H1 (cell line): ENCODE measurements at regions of chr1 and their contacts with region 1.

Region 1: DNA sequence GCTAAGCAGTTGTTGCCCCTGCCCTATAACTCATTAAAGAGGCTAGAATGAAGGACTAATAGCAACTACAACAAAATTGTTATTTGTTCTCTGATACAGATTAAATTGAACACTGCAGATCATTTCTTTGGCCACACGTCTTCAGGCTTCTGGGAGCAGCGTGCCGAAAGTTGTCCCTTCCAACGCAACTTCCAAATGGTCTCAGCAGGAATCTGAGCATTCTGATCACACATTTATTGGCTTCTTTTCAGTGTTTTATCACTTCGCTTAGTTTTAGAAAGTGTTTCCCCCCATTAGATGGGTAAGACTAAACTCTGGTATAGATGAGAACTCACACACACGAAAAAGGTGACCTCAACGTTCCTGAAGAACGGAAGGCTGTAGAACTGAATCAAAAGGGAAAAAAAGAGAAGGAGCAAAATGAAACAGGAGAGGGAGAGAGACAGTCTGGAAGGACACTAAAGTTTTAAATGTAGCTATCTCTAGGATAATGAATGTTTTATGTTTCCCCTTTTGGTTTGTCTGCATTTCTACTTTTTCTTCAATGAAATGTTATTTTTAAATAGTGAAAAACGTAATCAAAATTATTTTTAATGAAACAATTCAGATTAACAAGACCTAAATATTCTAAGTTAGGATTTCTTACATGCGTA is 336.5 kb downstream of the RRAGC start:
- DNase-seq: no peak
- H3K4me3 ChIP-seq: no peak overlapping the region
- H3K27ac ChIP-seq: no peak overlapping the region
- H3K4me1 ChIP-seq: no peaks in the 10 kb centered on the region
- H3K27me3 ChIP-seq: peaks cover 0 to 1% (median 0%) of the 10 kb centered on the region in 4 experiments; a peak in 1 of 7 replicates
- CTCF ChIP-seq: no peak
- EP300 ChIP-seq: no peak
- POLR2A ChIP-seq: no peak
- RAD21 ChIP-seq: no peak

Region 2: DNA sequence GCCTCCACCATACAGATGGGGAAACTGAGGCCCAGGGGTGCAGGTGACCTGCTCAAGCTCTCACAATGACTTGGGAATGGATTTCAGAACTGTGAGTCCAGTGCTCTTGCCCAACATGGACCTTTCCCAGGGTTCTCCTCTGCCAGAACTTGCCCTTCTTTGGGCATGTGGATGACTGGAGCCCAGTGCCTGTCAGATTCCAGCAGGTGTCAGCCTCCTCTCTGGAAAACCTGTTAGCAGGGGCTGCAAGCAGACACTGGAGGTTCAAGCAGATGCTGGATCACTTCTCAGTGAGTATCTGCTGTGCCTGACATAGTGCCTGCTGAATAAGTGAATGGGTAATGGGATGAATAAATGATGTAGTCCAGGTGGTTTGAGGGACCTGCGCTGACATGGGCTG is 162.2 kb before region 1 on chr1:
- CTCF ChIA-PET with region 1: no interaction called
- POLR2A ChIA-PET with region 1: no interaction called
- DNase-seq: no peak
- H3K4me3 ChIP-seq: no peak overlapping the region
- H3K27ac ChIP-seq: no peak overlapping the region
- H3K4me1 ChIP-seq: peaks cover 0 to 6% (median 3%) of the 10 kb centered on the region in 4 experiments; a peak in 3 of 7 replicates
- H3K27me3 ChIP-seq: no peaks in the 10 kb centered on the region
- CTCF ChIP-seq: peak; percentile 39 to 55 (median 54)
- EP300 ChIP-seq: no peak
- POLR2A ChIP-seq: no peak
- RAD21 ChIP-seq: peak; percentile 63 to 84

Region 3: DNA sequence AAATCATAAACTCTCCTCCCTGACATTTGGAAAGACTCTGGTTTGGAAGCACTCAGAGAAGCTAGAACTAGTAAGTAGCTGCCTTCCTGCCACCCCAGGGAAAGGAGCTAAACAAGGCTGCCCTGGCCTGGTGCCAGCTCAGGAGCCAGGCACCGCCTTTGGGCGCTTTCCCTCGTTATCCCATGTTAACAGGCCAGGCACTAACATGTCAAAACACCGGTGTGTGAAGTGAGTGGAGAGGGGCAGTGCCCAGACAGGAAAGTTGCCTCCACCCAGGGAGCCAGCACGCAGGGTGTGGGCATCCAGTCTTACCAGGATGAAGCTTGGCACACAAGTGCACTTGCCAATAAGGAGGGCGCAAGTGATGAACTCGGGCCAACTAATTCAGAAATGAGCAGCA is 10.3 kb before region 1 on chr1:
- CTCF ChIA-PET with region 1: interaction called, 18 read pairs
- POLR2A ChIA-PET with region 1: interaction called, 3 read pairs
- DNase-seq: no peak
- H3K4me3 ChIP-seq: no peak overlapping the region
- H3K27ac ChIP-seq: no peak overlapping the region
- H3K4me1 ChIP-seq: peaks cover 0 to 8% (median 4%) of the 10 kb centered on the region in 4 experiments; a peak in 5 of 7 replicates
- H3K27me3 ChIP-seq: 0 out of 7 replicates have a peak, but pooled peaks cover 0 to 2% (median 0%) of the 10 kb centered on the region in 4 experiments
- CTCF ChIP-seq: no peak
- EP300 ChIP-seq: no peak
- POLR2A ChIP-seq: no peak
- RAD21 ChIP-seq: no peak

Region 4: DNA sequence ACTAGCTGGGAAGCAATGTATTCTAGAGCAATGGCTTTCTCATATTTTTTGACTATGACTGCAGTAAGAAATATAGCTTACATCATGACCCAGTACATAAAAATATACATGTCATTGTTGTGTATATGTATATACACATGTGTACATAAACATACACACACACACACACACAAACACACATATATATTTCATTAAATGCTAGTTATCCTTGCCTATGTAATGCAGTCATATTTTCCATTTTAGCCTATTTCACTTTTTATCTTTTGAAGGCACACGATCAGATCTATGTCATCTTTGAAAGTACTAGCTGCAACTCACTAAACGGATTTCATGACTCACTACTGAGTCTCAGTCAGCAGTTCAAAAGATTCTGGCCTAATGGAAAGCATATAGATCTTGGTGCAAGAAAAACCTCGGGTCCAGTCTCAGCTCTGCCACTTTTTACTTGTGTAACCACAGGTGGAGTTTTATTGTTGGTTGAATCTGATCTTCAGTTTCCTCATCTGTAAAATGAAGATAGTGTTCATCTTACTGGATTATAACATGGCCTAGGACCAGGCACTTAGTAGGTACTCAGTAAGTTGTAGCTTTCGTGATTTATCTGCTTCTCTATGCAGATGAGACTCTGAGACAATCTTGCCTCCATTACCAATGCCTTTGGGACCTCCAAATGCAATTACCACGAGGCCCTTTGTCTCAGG is 10.9 kb after region 1 on chr1:
- CTCF ChIA-PET with region 1: interaction called, 11 read pairs
- POLR2A ChIA-PET with region 1: no interaction called
- DNase-seq: no peak
- H3K4me3 ChIP-seq: no peak overlapping the region
- H3K27ac ChIP-seq: no peak overlapping the region
- H3K4me1 ChIP-seq: no peaks in the 10 kb centered on the region
- H3K27me3 ChIP-seq: no peaks in the 10 kb centered on the region
- CTCF ChIP-seq: no peak
- EP300 ChIP-seq: no peak
- POLR2A ChIP-seq: no peak
- RAD21 ChIP-seq: no peak